ENCODE measurements at regions of chr2 and their contacts with region 1.

Region 1: GRCh38 chr2:66013465-66013864 is 421.5 kb upstream of the MEIS1 start:
- DNase-seq: peak; percentile 23
- H3K4me3 Mint-ChIP-seq: no peak overlapping the region
- H3K27ac Mint-ChIP-seq: no peak overlapping the region
- H3K4me1 Mint-ChIP-seq: peaks cover 5% of the 10 kb centered on the region
- H3K27me3 Mint-ChIP-seq: no peaks in the 10 kb centered on the region
- CTCF ChIP-seq: peak; percentile 22

Region 2: GRCh38 chr2:65880436-65881163 is 132.9 kb before region 1 on chr2:
- CTCF ChIA-PET with region 1: no interaction called
- POLR2A ChIA-PET with region 1: no interaction called
- intact Hi-C with region 1: no loop called
- DNase-seq: no peak
- H3K4me3 Mint-ChIP-seq: no peak overlapping the region
- H3K27ac Mint-ChIP-seq: no peak overlapping the region
- H3K4me1 Mint-ChIP-seq: no peaks in the 10 kb centered on the region
- H3K27me3 Mint-ChIP-seq: no peaks in the 10 kb centered on the region
- CTCF ChIP-seq: no peak

Region 3: DNA sequence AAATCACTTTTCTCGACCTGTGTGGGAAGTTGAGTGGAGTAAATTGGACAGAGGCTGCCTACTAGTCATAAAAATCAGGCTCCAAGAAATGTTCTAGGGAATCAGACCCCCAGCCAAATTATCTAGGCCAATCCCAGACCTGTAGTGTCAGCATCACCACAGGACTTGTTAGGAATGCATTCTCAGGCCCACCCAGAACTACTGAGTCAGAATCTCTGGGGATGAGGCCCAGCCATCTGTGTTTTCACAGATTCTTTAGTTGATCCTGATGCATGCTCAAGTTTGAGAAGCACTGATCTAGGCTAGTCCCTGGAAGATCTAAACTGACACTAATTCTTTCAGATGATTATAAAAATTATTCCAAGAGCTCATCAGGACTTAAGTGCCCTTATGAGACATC is 12.6 kb before region 1 on chr2:
- CTCF ChIA-PET with region 1: interaction called, 10 read pairs
- POLR2A ChIA-PET with region 1: interaction called, 3 read pairs
- intact Hi-C with region 1: no loop called
- DNase-seq: no peak
- H3K4me3 Mint-ChIP-seq: no peak overlapping the region
- H3K27ac Mint-ChIP-seq: no peak overlapping the region
- H3K4me1 Mint-ChIP-seq: peaks cover 5% of the 10 kb centered on the region
- H3K27me3 Mint-ChIP-seq: no peaks in the 10 kb centered on the region
- CTCF ChIP-seq: no peak

Region 4: DNA sequence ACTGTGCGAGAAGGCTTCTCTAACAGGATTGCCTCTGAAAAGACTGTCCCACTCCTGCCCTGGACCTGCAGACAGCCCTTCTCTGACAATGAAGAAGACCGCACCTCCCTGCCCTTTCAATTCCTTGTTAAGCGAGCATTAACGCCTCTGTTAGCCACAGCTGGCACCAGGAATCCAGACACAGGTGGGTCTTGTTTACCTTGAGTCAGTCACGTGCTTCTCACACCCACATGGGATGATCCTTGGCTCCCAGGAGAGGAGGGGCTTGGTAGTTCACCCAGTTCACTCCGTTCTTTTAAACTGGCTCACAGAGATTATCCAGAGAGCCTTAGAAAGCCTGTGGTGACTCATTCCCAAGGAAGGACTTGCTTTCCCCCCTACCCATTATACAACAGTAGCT is 10.9 kb after region 1 on chr2:
- CTCF ChIA-PET with region 1: interaction called, 10 read pairs
- POLR2A ChIA-PET with region 1: interaction called, 5 read pairs
- intact Hi-C with region 1: no loop called
- DNase-seq: peak; percentile 28
- H3K4me3 Mint-ChIP-seq: no peak overlapping the region
- H3K27ac Mint-ChIP-seq: peak overlapping the region; percentile 21
- H3K4me1 Mint-ChIP-seq: peaks cover 30% of the 10 kb centered on the region
- H3K27me3 Mint-ChIP-seq: no peaks in the 10 kb centered on the region
- CTCF ChIP-seq: no peak

Region 5: GRCh38 chr2:67234439-67234838 is 1221.0 kb after region 1 on chr2:
- CTCF ChIA-PET with region 1: no interaction called
- POLR2A ChIA-PET with region 1: no interaction called
- intact Hi-C with region 1: loop called (anchors 5 kb)
- DNase-seq: peak; percentile 16
- H3K4me3 Mint-ChIP-seq: no peak overlapping the region
- H3K27ac Mint-ChIP-seq: no peak overlapping the region
- H3K4me1 Mint-ChIP-seq: no peaks in the 10 kb centered on the region
- H3K27me3 Mint-ChIP-seq: no peaks in the 10 kb centered on the region
- CTCF ChIP-seq: peak; percentile 38

Measured in MCF 10A (cell line).